Activated CD4-positive, alpha-beta T cell treated with anti-CD3 and anti-CD28 coated beads for 36 hours (primary cell): ENCODE measurements at regions of chr6 and their contacts with region 1.

Region 1: DNA sequence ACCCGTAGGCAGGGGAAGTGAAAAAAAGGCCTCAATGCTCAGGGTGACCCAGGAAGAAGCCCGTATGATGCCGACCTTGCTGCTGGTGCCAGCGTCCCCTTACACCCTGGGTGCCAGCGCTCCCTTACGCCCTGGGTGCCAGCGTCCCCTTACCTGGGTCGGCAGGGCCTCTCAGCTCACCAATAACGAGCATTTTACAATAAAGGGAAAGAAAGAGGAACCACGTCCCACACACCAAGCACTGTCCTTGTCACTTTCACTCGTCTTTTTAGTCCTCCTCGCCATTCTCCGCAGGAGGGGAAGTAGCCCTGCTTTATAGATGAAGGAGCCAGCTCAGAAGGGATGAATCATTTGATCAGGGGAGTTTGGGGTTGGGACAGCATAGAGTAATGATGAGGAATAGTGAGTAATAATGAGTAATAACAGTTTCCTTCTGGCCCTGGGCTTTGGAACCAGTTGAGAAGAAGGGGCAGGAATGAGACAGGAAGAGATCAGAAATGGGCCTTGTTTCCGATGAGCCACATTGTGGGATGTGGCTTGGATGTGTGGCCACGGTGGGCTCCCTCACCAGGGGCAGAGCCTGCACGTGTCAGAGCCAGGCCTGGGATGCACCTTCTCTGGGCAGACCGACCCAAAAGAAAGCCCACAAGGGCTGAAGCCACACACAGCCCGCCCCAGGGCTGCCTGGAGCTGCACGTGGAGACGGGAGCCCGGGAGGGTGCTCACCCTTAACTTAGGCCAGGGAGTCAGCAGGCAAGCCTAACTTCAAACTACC is 75.7 kb downstream of the SYNJ2 start:
- DNase-seq: peak; percentile 76
- ATAC-seq: peak; percentile 97
- H3K4me3 Mint-ChIP-seq: no peak overlapping the region
- H3K27ac Mint-ChIP-seq: peak overlapping the region; percentile 59
- H3K4me1 Mint-ChIP-seq: peaks cover 59% of the 10 kb centered on the region
- H3K27me3 Mint-ChIP-seq: no peaks in the 10 kb centered on the region

Region 2: GRCh38 chr6:157995458-157995857 is 61.9 kb before region 1 on chr6:
- CTCF ChIA-PET with region 1: no interaction called
- POLR2A ChIA-PET with region 1: no interaction called
- intact Hi-C with region 1: no loop called
- DNase-seq: no peak
- ATAC-seq: no peak
- H3K4me3 Mint-ChIP-seq: no peak overlapping the region
- H3K27ac Mint-ChIP-seq: no peak overlapping the region
- H3K4me1 Mint-ChIP-seq: peaks cover 45% of the 10 kb centered on the region
- H3K27me3 Mint-ChIP-seq: no peaks in the 10 kb centered on the region

Region 3: GRCh38 chr6:158040051-158040803 is 17.2 kb before region 1 on chr6:
- CTCF ChIA-PET with region 1: interaction called, 3 read pairs
- POLR2A ChIA-PET with region 1: no interaction called
- intact Hi-C with region 1: loop called in 1 of 2 experiments (anchors 2 kb)
- DNase-seq: peak; percentile 57
- ATAC-seq: peak; percentile 73
- H3K4me3 Mint-ChIP-seq: no peak overlapping the region
- H3K27ac Mint-ChIP-seq: peak overlapping the region; percentile 73
- H3K4me1 Mint-ChIP-seq: peaks cover 32% of the 10 kb centered on the region
- H3K27me3 Mint-ChIP-seq: no peaks in the 10 kb centered on the region

Region 4: GRCh38 chr6:158047127-158047518 is 10.3 kb before region 1 on chr6:
- CTCF ChIA-PET with region 1: interaction called, 8 read pairs
- POLR2A ChIA-PET with region 1: interaction called, 5 read pairs
- intact Hi-C with region 1: loop called in 1 of 2 experiments (anchors 1 kb)
- DNase-seq: peak; percentile 91
- ATAC-seq: peak; percentile 93
- H3K4me3 Mint-ChIP-seq: peak overlapping the region; percentile 25
- H3K27ac Mint-ChIP-seq: peak overlapping the region; percentile 85
- H3K4me1 Mint-ChIP-seq: peaks cover 33% of the 10 kb centered on the region
- H3K27me3 Mint-ChIP-seq: no peaks in the 10 kb centered on the region

Region 5: DNA sequence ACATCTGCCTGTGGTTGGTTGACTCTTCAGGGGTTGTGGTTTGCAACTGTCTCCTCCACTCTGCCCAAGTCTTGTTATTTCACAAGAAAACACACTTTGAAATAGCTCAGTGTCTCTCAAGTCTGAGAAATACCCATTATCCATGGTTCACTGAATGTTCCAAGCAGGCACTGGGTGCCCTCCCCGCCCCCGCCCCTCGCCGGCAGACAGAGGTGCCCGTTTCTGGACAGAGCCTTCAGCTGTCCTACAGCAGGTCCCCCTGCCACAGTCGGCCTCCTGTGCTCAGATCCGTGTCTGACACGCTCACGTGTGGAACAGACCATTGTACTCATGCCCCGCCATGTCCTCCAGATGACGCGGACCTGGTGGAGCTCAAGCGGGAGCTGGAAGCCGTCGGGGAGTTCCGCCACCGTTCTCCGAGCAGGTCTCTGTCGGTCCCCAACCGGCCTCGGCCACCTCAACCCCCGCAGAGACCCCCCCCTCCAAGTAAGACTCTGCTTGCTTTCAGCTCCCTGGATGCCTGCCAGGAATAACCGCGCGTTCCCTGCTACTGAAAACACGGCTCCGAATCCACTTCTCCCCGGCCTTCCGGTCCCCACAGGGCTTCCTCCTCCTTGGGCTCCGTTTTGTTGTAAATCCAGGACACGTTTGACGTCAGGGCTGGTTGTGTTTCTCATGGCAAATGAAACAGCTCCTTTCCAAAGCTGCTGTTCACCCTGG is 29.3 kb after region 1 on chr6:
- CTCF ChIA-PET with region 1: no interaction called
- POLR2A ChIA-PET with region 1: no interaction called
- intact Hi-C with region 1: no loop called
- DNase-seq: no peak
- ATAC-seq: no peak
- H3K4me3 Mint-ChIP-seq: no peak overlapping the region
- H3K27ac Mint-ChIP-seq: no peak overlapping the region
- H3K4me1 Mint-ChIP-seq: no peaks in the 10 kb centered on the region
- H3K27me3 Mint-ChIP-seq: no peaks in the 10 kb centered on the region